Activated CD4-positive, alpha-beta T cell treated with anti-CD3 and anti-CD28 coated beads, Interleukin-2, amount 10 ng/mL, durations not matched to agents 24 days and 14 days (primary cell): ENCODE measurements at regions of chr9 and their contacts with region 1.

Region 1: GRCh38 chr9:99819856-99820684 is 1.6 kb upstream of the NR4A3 start:
- DNase-seq: peak; percentile 95
- H3K4me3 Mint-ChIP-seq: peak overlapping the region; percentile 99
- H3K27ac Mint-ChIP-seq: peak overlapping the region; percentile 96
- H3K4me1 Mint-ChIP-seq: peaks cover 49% of the 10 kb centered on the region
- H3K27me3 Mint-ChIP-seq: peaks cover 27% of the 10 kb centered on the region

Region 2: DNA sequence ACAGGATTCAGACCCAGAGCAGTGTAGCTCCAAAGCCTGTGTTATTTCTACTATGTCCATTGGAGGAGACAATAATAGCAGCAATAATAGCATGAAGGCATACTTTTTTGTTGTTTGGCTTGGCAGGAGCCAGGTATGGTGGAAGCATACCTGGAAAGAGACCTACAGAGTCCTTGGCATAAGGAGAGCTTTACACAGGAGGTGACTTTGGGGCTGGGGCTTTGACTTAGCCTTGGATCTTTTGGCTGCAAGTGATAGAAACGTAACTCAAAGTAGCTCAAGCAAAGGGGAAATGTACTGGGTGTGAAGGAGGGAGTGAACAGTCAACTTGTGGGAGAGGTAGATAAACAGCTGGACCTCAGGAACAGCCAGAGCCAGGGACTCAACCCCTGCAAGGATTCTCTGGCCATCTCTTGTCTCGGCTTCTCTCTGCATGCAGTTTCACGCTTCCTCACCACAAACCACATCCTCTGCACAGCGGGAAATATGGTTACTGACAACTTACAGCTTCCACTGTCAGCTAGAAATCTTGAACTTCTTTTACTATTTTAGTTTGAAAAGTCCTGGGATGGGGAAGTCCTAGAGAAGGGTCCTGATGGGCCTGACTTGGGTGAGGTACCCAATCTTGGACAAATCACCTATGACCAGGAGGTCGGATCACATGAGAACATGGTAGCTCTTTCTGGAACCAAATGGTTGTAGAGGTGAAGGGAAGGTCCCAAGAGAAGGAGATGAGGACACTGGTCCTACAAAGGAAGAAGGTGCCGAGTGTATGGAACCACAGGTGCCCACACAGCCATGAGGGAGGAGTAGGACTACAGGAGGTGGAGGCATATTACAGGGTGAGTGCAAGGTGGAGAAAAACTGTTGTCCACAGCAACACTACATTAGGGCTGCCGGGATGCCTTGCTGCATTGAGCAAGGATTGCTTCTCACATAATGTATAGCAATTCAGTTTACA is 762.1 kb before region 1 on chr9:
- intact Hi-C with region 1: loop called (anchors 10 kb)
- DNase-seq: peak; percentile 94
- H3K4me3 Mint-ChIP-seq: peak overlapping the region; percentile 77
- H3K27ac Mint-ChIP-seq: peak overlapping the region; percentile 82
- H3K4me1 Mint-ChIP-seq: peaks cover 68% of the 10 kb centered on the region
- H3K27me3 Mint-ChIP-seq: no peaks in the 10 kb centered on the region

Region 3: GRCh38 chr9:99221621-99222415 is 598.3 kb before region 1 on chr9 and contains the starts of genes ALG2 and SEC61B:
- intact Hi-C with region 1: loop called (anchors 1 kb)
- DNase-seq: peak; percentile 98
- H3K4me3 Mint-ChIP-seq: peak within 1 kb of the TSS; percentile 97
- H3K27ac Mint-ChIP-seq: peak within 1 kb of the TSS; percentile 99
- H3K4me1 Mint-ChIP-seq: peaks cover 51% of the 10 kb centered on the region
- H3K27me3 Mint-ChIP-seq: no peaks in the 10 kb centered on the region
- total RNA-seq, gene ALG2: 29.2 and 31.0 TPM in 2 replicates
- total RNA-seq, gene SEC61B: 169 and 170 TPM in 2 replicates

Region 4: DNA sequence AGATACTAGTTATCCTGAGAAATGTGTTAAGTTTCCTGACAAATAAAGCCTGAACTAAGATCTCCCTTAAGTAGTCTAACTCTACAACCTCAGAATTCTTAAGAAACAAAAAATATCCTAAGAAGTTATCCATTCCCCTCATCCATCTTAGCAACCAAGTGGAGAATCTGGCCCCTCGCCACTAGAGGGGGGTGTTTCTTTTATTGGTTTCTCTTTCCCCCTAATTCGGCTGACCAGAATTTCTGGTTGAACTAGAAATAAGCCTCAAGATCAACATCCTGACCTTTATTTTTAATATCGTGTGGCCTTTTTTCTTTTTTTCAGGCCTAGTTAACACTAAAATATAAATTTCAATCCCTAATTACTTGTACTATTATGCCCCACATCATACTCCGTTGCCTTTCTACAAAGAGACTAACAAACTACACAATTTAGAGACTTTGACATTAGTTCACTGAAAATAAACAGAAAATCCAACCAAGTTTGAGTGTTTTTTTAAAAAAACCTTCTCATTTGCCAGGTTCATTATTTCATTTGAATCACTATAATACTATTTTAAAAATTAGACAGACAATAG is 12.7 kb before region 1 on chr9:
- intact Hi-C with region 1: loop called (anchors 1 kb)
- DNase-seq: peak; percentile 89
- H3K4me3 Mint-ChIP-seq: no peak overlapping the region
- H3K27ac Mint-ChIP-seq: no peak overlapping the region
- H3K4me1 Mint-ChIP-seq: peaks cover 23% of the 10 kb centered on the region
- H3K27me3 Mint-ChIP-seq: peaks cover 22% of the 10 kb centered on the region

Region 5: DNA sequence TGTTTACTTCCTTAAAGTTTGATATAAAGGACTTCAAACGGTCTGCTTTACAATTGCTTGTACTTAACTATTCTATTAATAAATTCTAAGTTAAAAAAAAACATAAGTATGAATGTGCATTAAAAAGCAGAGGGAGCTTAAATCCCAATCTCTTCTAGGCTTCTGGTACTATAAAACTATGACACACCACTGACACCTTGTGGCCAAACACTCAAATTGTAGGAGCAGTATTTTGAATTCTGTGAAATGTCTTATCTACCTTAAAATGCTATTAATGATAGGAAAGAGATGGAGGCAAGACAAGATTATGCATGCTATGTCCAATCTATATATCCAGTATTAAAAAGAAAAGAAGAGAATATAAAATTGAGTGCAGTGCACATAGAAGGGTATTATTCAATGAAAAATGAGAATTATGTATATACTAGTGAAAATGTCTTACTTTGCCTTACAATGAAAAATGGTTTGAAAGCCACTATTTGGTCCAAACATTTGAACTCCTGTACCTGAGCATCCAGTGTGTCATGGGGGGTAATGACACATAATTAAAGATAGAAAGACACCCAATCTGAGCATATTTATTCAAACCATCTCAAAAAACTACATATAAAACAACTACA is 191.1 kb after region 1 on chr9:
- intact Hi-C with region 1: loop called (anchors 5 kb)
- DNase-seq: peak; percentile 82
- H3K4me3 Mint-ChIP-seq: no peak overlapping the region
- H3K27ac Mint-ChIP-seq: no peak overlapping the region
- H3K4me1 Mint-ChIP-seq: no peaks in the 10 kb centered on the region
- H3K27me3 Mint-ChIP-seq: no peaks in the 10 kb centered on the region

Region 6: DNA sequence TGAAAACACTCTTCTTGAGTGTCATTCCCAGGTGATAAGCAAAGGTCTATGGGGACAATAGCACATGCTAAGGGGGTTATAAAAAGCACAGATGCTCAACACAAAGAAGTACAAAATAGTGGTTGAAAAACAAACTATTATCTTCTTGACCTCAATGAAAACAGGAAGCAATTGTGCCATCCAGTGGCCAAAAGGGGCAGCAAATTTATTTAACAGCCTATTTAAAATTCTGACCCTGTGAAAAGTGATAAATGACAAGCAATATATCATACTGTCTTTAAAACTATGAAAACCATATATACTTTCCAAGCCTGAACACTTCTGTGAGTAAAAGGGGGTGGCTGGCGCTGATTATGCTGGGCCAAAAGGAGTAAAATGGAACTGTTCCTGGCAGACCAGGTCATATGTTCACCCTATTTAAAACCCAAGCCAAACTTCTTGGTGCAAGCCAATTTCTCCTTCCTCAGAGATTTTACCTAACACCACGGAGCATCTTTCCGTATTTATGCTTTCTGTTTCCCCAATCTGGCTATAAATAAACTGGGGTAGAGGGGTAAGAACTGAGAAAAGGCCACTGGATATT is 503.0 kb after region 1 on chr9:
- intact Hi-C with region 1: loop called (anchors 10 kb)
- DNase-seq: peak; percentile 67
- H3K4me3 Mint-ChIP-seq: no peak overlapping the region
- H3K27ac Mint-ChIP-seq: no peak overlapping the region
- H3K4me1 Mint-ChIP-seq: peaks cover 2% of the 10 kb centered on the region
- H3K27me3 Mint-ChIP-seq: no peaks in the 10 kb centered on the region